ENCODE measurements at regions of chr2 and their contacts with region 1.

Region 1: DNA sequence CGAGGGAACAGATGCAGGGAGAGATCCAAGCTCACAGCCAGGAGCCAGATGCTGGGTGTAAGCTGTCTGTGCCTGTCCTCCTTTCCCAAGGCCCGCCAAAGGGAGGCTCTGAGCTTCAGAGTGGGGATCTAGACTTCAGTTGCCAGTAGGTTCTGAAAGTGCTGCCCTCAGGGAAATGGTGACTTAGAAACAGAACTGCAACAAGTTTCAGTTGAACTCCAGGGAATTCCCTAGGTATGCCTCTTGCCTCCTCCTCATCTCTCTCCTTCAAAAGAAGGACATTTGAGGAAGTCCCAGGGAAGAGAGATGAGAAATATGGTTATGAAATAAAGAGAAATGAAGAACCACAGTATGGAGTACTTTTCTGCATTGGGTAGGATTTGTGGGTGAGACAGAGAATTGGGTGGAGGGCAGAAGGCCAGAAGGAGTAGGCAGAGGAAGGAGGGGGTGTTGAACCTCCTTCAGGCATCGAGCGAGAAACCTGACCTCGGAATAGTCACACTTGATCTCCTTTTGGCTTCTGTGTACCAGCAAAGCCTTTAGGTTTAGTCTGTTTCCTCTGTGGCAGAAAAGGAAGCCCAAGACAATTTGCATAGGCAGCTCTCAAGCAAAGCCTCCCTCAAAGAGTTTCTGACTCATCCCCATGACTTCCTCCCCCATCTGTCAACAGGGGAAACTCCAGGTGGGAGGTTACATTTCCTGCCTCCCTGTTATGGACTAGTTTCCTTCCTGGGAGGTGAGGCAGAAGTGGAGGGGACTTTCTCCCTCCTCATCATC is 45.7 kb downstream of the QPCT start:
- DNase-seq: peak; percentile 87
- H3K4me3 ChIP-seq: 0 out of 2 replicates have a peak overlapping the region, but pooled peaks have one; percentile 16
- H3K27ac ChIP-seq: peak overlapping the region; percentile 61
- H3K4me1 ChIP-seq: peaks cover 53% of the 10 kb centered on the region
- H3K27me3 ChIP-seq: no peaks in the 10 kb centered on the region

Region 2: DNA sequence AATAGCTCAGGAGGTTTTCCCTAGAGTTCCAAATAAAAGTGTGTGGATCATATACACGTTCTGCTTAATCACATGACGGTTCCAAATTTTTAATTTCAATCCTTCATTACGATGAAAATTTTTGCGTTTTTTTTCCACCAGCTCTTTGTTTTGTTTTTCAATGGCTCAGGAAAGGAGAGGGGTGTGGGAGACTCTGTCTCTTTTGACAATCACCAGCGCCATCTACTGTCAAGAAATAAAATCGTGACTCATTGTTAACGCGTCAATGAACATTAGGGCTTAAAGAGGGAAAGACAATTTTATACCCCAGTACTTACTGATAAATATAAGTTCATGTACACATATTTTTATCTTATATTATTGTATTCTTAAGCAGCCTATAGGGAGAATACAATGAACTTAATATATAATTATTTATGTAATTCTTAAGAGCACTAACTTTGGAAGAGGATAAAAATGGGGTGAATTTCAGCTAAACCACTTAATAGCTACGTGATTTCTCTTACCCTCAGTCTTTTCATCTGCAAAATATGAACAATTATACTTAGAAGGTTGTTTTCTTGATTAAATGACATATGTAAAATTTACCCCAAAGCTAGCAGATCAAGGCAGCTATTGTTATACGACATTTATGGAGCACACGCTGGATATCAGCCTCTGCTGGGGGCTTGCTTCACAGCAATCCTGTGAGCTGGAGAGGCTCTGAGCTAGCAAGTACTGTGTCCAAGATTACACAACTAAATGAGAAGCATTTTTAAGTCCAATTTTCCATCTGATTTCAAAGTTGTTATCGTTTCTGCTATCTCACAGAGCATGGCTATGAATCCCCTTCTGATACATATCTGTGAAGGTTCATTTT is 487.5 kb after region 1 on chr2:
- in situ Hi-C with region 1: loop called (anchors 5 kb)
- DNase-seq: peak; percentile 79
- H3K4me3 ChIP-seq: peak overlapping the region; percentile 58
- H3K27ac ChIP-seq: no peak overlapping the region
- H3K4me1 ChIP-seq: peaks cover 6% of the 10 kb centered on the region
- H3K27me3 ChIP-seq: no peaks in the 10 kb centered on the region

Region 3: DNA sequence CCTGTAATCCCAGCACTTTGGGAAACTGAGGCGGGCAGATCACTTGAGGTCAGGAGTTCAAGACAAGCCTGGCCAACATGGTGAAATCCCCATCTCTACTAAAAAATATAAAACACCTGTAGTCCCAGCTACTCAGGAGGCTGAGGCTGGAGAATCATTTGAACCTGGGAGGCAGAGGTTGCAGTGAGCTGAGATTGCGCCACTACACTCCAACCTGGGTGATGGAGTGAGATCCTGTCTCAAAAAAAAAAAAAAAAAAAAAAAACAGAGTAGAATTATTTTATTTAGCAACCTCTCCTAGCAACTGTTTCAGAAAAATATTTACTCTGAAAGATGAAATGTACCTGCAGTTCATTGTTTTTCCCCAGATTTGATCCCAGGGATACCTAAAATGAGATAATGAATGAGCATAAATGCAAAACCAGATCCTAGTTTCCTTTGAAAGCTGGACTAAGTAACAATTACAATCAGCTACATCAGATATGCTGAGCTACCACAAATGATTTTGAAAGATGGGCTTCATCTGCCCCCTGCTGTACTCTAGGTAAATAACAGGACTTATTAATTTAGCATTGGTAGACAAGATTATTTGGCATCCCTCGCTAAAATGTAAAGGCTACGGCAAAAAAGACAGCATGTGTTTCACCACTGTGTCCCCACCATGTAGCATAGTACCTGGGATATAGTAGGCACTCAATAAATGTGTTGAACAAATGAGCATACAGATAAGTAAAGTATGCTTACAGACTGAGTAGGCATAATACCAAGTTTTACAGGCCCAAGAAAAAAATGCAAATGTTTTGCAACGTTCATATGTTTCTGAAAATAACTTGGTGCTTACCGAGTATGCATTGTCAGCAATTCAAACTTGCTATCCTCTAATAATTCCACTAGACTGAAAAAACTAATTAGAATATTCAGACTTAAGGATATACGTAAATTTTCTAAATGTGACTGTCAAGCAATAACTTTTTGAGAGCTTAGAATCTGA is 884.4 kb after region 1 on chr2:
- in situ Hi-C with region 1: loop called (anchors 25 kb)
- DNase-seq: peak; percentile 81
- H3K4me3 ChIP-seq: no peak overlapping the region
- H3K27ac ChIP-seq: no peak overlapping the region
- H3K4me1 ChIP-seq: peaks cover 2% of the 10 kb centered on the region
- H3K27me3 ChIP-seq: no peaks in the 10 kb centered on the region